Ovary (tissue), 10 donors: ENCODE measurements at regions of chr11 and their contacts with region 1.

Region 1: DNA sequence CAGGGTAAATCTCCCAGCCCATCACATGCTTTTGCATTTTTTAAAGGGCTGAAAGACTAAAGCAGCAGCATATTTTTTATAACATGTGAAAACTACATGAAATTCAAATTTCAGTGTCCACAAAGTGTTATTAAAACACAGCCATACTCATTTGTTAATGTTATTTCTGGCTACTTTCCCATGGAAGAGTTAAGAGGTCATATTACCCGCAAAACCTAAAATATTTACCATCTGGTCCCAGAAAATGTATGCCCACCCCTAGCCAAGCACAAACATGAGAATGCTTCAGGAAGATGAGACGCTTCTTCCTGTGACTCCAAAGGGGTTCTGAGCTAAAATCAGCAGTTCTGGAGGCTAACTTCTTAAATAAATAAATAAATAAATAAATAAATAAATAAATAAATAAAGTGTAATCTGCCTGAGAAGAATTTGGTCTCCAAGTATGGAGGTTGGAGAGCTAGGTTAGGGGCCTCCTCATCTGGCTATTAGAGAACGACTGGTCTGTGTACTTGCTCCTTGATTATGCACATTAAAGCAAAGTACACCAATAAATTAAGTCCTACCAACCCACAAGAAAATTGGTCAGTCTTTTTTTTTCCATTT is 9.7 kb downstream of the IMMP1L start:
- DNase-seq: no peak
- H3K4me3 ChIP-seq: no peak overlapping the region
- H3K27ac ChIP-seq: no peak overlapping the region
- H3K4me1 ChIP-seq: no peaks in the 10 kb centered on the region
- H3K27me3 ChIP-seq: no peaks in the 10 kb centered on the region
- CTCF ChIP-seq: no peak
- EP300 ChIP-seq: no peak
- POLR2A ChIP-seq: no peak

Region 2: GRCh38 chr11:31509429-31510345 is 10.0 kb after region 1 on chr11 and contains the starts of genes ELP4 and IMMP1L:
- intact Hi-C with region 1: loop called in 1 of 4 experiments (anchors 2 kb)
- DNase-seq: peak; percentile 95 to 97 (median 96)
- H3K4me3 ChIP-seq: peak within 1 kb of the TSS; percentile 92
- H3K27ac ChIP-seq: peak within 1 kb of the TSS; percentile 68 to 81
- H3K4me1 ChIP-seq: no peaks in the 10 kb centered on the region
- H3K27me3 ChIP-seq: no peaks in the 10 kb centered on the region
- CTCF ChIP-seq: no peak
- EP300 ChIP-seq: no peak
- POLR2A ChIP-seq: no peak
- total RNA-seq, gene ELP4: 11.6 to 25.8 (median 13.8) TPM
- total RNA-seq, gene IMMP1L: 15.4 to 57.8 (median 22.7) TPM